Activated CD4-positive, alpha-beta memory T cell treated with anti-CD3 and anti-CD28 coated beads for 36 hours (primary cell): ENCODE measurements at regions of chr13 and their contacts with region 1.

Region 1: DNA sequence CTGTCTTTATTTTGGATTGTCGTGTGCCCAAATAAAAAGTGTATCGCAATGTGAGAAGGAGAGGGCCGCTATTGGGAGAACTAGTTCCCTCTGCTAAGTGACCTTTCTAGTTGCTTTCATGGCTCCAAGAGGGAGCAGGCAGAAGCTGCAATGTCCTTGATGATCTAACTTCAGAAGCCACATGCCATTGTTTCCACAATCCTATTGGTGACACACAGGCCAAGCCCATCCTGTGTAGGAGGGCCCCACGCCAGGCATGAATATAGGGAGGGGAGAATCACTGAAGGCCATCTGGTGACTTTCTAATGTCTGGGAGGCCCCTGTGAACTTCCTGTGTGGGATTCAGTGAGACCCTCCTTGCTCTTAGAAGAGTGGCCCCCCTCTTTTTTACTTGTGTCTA is 47.8 kb upstream of the KPNA3 start:
- DNase-seq: no peak
- H3K4me3 Mint-ChIP-seq: no peak overlapping the region
- H3K27ac Mint-ChIP-seq: no peak overlapping the region
- H3K4me1 Mint-ChIP-seq: no peaks in the 10 kb centered on the region
- H3K27me3 Mint-ChIP-seq: no peaks in the 10 kb centered on the region

Region 2: GRCh38 chr13:49652355-49653305 is 187.6 kb before region 1 on chr13:
- CTCF ChIA-PET with region 1: interaction called, 3 read pairs
- POLR2A ChIA-PET with region 1: no interaction called
- intact Hi-C with region 1: loop called (anchors 5 kb)
- DNase-seq: peak; percentile 39
- H3K4me3 Mint-ChIP-seq: no peak overlapping the region
- H3K27ac Mint-ChIP-seq: no peak overlapping the region
- H3K4me1 Mint-ChIP-seq: no peaks in the 10 kb centered on the region
- H3K27me3 Mint-ChIP-seq: no peaks in the 10 kb centered on the region

Region 3: GRCh38 chr13:49681842-49682435 is 158.3 kb before region 1 on chr13:
- CTCF ChIA-PET with region 1: no interaction called
- POLR2A ChIA-PET with region 1: no interaction called
- intact Hi-C with region 1: loop called (anchors 5 kb)
- DNase-seq: no peak
- H3K4me3 Mint-ChIP-seq: no peak overlapping the region
- H3K27ac Mint-ChIP-seq: no peak overlapping the region
- H3K4me1 Mint-ChIP-seq: peaks cover 26% of the 10 kb centered on the region
- H3K27me3 Mint-ChIP-seq: no peaks in the 10 kb centered on the region

Region 4: DNA sequence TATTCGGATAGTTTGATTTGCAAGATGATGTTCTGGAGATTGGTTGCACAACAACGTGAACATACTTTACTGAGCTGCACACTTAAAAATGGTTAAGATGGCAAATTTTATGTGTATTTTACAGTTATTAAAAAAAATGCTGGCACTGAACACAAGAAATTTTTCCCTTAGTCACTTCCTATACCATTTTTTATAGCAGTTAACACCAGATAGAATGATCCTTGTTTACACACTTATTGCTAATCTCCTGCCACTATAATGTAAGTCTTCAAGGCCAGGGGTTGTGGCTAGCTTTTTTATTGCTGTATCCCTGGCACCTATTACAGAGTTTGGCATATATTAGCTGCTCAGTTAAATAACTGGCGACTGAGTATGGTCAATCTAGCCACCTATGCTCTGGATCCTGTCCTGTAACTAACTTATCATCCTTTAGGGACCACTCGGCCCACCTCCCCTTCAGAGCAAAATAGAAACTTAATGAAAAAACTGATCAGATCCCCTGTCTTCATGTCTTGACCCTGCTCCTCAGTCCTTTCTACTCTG is 147.0 kb before region 1 on chr13:
- CTCF ChIA-PET with region 1: no interaction called
- POLR2A ChIA-PET with region 1: no interaction called
- intact Hi-C with region 1: no loop called
- DNase-seq: no peak
- H3K4me3 Mint-ChIP-seq: no peak overlapping the region
- H3K27ac Mint-ChIP-seq: no peak overlapping the region
- H3K4me1 Mint-ChIP-seq: peaks cover 15% of the 10 kb centered on the region
- H3K27me3 Mint-ChIP-seq: no peaks in the 10 kb centered on the region